HepG2 (cell line): ENCODE measurements at regions of chr13 and their contacts with region 1.

Region 1: DNA sequence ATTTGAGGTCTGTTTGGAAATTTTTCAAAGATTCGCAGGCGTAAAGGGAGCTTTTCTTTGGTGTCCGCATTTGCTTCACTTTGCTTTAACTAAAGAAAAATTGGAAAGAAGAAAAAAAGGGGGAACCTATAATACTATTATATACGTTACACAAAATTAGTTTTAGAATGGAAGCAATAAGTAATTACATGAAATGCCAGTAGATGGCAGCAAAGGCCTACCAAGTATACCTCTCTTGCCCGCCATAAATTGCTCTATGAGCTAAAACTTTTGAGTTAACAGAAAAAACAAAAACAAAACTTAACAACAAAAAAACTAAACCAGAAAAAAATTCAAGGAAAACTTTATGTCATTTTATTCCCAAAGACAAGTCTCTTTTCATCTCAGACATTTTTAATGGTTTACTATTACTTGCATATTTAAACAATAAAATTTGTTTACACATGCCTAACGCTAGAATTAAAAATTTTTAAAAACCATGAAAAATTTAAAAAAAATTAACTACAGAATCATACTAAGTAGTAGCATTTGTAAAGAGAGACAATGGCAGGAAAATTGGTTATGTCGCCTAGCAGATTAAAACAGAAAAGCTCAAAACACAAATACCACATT is 271.4 kb downstream of the NALCN start:
- DNase-seq: peak; percentile 38
- ATAC-seq: peak; percentile 64; the same call in 2 of the 3 replicates
- H3K4me3 ChIP-seq: no peak overlapping the region
- H3K27ac ChIP-seq: no peak overlapping the region
- H3K4me1 ChIP-seq: no peaks in the 10 kb centered on the region
- H3K27me3 ChIP-seq: peaks cover 1 to 10% of the 10 kb centered on the region in 2 experiments; a peak in 2 of 5 replicates
- CTCF ChIP-seq: peak; percentile 60
- EP300 ChIP-seq: no peak
- POLR2A ChIP-seq: no peak
- RAD21 ChIP-seq: peak; percentile 33; the same call in 1 of the 2 replicates

Region 2: DNA sequence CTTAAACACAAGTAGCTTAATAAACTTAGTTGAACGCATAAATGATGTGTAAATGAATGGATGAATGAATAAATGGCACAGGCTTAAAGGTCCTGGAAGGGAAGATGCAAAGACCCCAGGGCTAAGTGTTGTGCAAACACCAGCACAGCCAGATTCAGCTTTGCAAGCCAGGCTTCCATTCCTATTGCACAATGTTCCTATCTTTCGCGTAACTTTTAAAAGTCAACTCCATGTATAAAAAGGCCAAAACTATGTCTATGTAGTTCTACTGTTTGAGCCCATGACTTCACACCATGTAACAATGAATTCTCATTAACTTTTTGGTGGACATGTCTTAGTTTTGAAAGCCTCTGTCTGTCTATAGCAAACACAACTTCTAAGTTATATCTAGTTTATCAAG is 45.4 kb after region 1 on chr13:
- CTCF ChIA-PET with region 1: no interaction called
- POLR2A ChIA-PET with region 1: no interaction called
- in situ Hi-C with region 1: no loop called
- intact Hi-C with region 1: no loop called
- DNase-seq: no peak
- ATAC-seq: no peak
- H3K4me3 ChIP-seq: no peak overlapping the region
- H3K27ac ChIP-seq: no peak overlapping the region
- H3K4me1 ChIP-seq: no peaks in the 10 kb centered on the region
- H3K27me3 ChIP-seq: no peaks in the 10 kb centered on the region; a peak in 1 of 5 replicates
- CTCF ChIP-seq: no peak
- EP300 ChIP-seq: no peak
- POLR2A ChIP-seq: no peak
- RAD21 ChIP-seq: no peak

Region 3: DNA sequence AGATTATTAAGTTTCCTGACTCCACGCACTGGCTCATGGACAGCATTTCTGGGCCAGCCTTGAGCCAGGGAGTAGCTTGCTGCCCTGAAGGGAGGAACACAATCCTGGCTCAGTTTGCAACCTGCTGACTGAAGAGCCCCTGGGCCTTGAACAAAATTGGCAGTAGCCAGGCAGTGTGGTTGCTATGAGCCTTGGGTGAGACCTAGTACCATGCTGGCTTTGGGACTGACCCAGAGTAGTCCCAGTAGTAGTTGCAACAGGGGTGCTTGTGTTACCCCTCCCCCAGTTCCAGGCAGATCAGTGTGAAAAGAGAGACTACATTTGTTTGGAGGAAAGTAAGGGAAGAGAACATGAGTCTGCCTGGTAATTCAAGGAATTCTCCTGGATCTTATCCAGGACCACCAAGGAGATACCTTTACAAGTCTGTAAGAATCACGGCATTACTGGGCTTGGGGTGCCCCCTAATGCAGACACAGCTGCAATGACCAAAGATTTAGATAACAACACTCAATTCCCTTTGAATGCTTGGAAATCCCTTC is 329.6 kb after region 1 on chr13:
- CTCF ChIA-PET with region 1: no interaction called
- POLR2A ChIA-PET with region 1: no interaction called
- in situ Hi-C with region 1: loop called (anchors 25 kb)
- intact Hi-C with region 1: loop called (anchors 5 kb)
- DNase-seq: no peak
- ATAC-seq: no peak
- H3K4me3 ChIP-seq: no peak overlapping the region
- H3K27ac ChIP-seq: no peak overlapping the region
- H3K4me1 ChIP-seq: no peaks in the 10 kb centered on the region
- H3K27me3 ChIP-seq: no peaks in the 10 kb centered on the region
- CTCF ChIP-seq: peak; percentile 40
- EP300 ChIP-seq: no peak
- POLR2A ChIP-seq: no peak
- RAD21 ChIP-seq: no peak

Region 4: DNA sequence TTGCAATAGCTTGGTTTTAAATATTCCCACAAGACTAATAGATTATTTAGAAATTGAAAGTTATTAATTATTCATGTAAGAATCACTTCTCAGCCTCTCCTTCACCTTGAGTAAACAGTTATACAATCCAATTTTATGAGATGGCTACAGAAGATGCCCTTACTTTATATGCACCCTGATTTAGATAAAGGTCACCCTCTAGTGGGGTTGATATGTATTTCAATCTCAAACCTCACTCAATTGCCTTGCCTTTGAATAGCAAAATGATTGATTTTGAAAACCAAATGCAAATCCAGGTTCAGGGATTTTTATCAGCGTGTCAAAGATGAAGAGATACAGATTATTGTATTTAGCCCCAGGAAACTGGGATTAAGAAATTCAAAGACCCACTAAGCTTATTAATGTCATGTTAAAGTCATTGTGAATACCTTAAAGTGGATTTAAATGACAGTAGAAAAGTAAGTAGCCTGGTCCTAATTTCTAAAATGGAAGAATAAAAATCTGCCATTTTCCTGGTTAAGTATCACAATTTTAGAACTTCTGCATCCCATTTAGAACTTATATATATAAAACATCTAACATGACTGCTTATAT is 612.6 kb after region 1 on chr13:
- CTCF ChIA-PET with region 1: interaction called, 3 read pairs
- POLR2A ChIA-PET with region 1: no interaction called
- in situ Hi-C with region 1: loop called (anchors 25 kb)
- intact Hi-C with region 1: loop called (anchors 1 kb)
- DNase-seq: no peak
- ATAC-seq: peak; percentile 51; the same call in 2 of the 3 replicates
- H3K4me3 ChIP-seq: no peak overlapping the region
- H3K27ac ChIP-seq: no peak overlapping the region
- H3K4me1 ChIP-seq: no peaks in the 10 kb centered on the region
- H3K27me3 ChIP-seq: no peaks in the 10 kb centered on the region; a peak in 1 of 5 replicates
- CTCF ChIP-seq: peak; percentile 30
- EP300 ChIP-seq: no peak
- POLR2A ChIP-seq: no peak
- RAD21 ChIP-seq: peak; percentile 35; the same call in 1 of the 2 replicates